Endothelial cell of umbilical vein (primary cell): ENCODE measurements at regions of chr19 and their contacts with region 1.

Region 1: DNA sequence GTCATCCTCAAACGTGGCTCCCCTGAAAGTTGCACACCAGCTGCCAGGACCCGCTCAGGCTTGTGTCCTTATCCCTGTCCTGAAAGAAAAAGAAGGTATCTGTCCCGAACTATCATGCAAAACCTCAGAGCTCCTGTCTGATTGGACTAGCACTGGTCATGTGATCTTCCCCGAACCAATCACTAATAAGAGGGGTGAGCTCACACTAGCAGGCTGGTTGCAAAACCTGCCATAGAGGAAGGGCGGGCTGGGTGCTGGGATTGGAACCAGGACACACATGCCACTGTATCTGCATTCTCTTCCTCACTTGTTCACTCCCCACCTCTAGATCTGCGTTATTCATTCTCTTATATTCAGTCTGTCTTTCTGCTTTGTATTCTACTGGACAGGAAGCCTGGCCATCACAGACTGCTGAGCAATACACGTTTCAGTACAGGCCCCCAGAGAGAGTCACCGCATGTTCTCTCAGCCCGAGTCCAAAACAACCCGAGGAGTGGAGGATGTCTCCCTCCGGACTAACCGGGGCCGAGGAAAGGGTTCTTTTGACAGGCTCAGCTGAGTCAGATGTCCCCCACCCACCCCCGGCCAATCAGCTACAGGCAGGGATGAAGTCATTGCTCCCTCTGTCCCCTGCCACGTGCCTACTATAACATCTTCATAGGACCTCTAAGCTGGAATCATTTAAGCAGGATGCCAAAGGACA is 97.7 kb downstream of the SIPA1L3 start:
- DNase-seq: peak; percentile 97
- H3K4me3 ChIP-seq: peak overlapping the region in 2 of 3 experiments; percentile 6 to 44
- H3K27ac ChIP-seq: peak overlapping the region; percentile 99
- H3K4me1 ChIP-seq: peaks cover 46% of the 10 kb centered on the region
- H3K27me3 ChIP-seq: no peaks in the 10 kb centered on the region
- CTCF ChIP-seq: no peak
- POLR2A ChIP-seq: peak; percentile 96

Region 2: DNA sequence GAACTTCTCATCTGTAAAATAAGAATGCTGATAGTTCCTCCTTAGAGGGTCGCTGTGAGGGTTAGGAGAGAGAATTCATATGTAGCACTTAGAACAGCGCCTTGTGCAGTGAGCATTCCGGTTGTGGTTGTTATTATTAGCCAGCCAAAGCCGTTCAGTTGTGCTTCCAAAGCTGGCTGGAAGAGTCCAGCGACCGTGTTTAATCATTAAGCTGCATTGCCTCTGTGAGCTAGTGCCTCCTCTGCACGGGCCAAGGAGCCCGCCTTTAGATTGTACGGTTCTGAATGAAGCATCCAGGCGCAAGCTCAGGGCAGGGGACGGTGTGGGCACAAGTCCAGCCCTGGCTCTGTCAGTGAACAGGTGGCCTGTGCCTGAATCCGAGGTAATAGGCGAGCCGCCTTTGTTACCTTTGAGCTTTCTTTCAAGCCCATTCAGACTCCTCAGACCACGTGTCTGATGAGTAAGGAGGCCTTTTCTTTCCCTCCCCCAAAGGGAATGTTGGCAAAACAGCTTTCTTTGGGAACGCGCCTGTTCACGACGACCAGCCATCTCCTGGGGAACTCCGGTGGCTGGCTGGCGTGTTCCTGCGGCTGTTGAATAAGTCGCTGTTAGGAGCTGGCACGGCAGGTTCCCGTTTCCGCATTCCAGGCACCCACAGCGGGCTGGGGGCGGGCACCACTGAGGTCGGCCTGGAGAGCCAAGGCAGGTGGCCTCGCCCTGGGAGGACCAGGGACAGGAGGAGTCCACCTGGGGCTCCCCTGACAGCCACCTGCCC is 72.6 kb before region 1 on chr19:
- CTCF ChIA-PET with region 1: no interaction called
- POLR2A ChIA-PET with region 1: interaction called, 9 read pairs
- dilution Hi-C with region 1: no loop called
- intact Hi-C with region 1: loop called (anchors 2 kb)
- DNase-seq: peak; percentile 52
- H3K4me3 ChIP-seq: no peak overlapping the region
- H3K27ac ChIP-seq: peak overlapping the region; percentile 32
- H3K4me1 ChIP-seq: peaks cover 13% of the 10 kb centered on the region
- H3K27me3 ChIP-seq: no peaks in the 10 kb centered on the region
- CTCF ChIP-seq: no peak
- POLR2A ChIP-seq: no peak

Region 3: DNA sequence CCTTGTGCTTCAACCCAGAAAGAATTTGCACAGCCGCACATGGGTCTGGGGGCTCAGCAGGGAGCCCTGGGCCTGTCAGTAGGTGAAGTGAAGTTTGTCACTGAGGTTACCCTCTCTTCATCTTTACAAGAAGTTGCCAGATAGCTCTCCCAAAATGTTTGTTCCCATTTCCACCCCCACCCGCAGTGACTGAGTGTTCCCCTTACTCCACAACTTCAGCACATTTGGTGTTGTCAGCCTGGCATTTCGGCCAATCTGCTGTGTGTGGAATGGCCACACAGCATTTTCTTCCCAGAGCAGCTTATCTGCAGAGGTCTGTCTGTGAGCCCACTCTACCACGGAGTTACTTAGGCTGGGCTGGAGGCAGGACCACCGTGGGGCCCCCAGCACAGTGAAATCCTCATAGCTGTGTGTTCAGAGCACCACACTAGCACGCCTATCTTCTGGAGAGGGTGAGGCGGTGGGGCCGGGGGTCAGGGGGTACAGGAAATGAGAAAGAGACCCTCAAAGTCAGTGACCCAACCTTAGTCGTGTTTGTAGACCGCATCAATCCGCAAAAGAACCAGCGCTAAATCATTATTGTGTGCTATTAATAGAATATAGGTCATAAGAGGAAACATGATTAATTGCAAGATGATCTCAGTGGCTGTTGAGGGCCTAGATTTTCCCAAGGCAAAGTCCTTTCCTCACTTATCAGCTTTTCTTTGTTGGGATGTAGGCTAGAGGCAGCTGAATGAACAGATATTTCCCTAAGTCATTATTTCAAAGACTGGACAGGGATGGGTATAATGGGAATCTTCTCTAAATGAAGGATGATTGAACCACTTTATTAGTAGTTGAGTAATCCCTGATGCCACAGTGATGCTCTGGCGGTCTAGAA is 18.4 kb after region 1 on chr19:
- CTCF ChIA-PET with region 1: interaction called, 8 read pairs
- POLR2A ChIA-PET with region 1: interaction called, 17 read pairs
- dilution Hi-C with region 1: no loop called
- intact Hi-C with region 1: loop called (anchors 1 kb)
- DNase-seq: peak; percentile 80
- H3K4me3 ChIP-seq: no peak overlapping the region
- H3K27ac ChIP-seq: peak overlapping the region; percentile 92
- H3K4me1 ChIP-seq: peaks cover 52% of the 10 kb centered on the region
- H3K27me3 ChIP-seq: no peaks in the 10 kb centered on the region
- CTCF ChIP-seq: no peak
- POLR2A ChIP-seq: no peak

Region 4: GRCh38 chr19:38049105-38049649 is 44.5 kb after region 1 on chr19:
- CTCF ChIA-PET with region 1: interaction called, 22 read pairs
- POLR2A ChIA-PET with region 1: no interaction called
- dilution Hi-C with region 1: no loop called
- intact Hi-C with region 1: loop called (anchors 1 kb)
- DNase-seq: no peak
- H3K4me3 ChIP-seq: no peak overlapping the region
- H3K27ac ChIP-seq: no peak overlapping the region
- H3K4me1 ChIP-seq: no peaks in the 10 kb centered on the region
- H3K27me3 ChIP-seq: no peaks in the 10 kb centered on the region
- CTCF ChIP-seq: no peak
- POLR2A ChIP-seq: no peak

Region 5: DNA sequence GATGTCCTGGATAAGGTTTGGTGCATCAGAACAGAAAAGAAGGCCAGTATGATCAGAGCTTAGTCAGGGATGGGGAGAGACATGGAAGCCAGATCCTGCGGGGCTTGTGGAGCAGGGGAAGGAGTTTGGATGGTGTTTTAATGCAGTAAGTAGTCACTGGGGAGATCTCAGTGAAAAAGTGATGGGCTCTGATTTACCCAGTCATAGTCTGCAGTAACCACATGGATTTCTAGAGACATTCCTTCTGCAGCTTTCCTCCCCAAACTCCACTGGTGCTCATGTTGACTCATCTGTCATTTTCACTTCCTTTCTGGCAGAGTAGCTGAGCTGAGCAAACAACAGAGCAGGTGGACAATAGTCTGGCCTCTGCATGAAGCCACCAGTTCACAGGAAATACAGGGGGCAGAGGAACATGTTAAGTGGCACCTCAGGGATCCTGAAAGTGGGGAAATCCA is 75.3 kb after region 1 on chr19:
- CTCF ChIA-PET with region 1: no interaction called
- POLR2A ChIA-PET with region 1: no interaction called
- dilution Hi-C with region 1: no loop called
- intact Hi-C with region 1: loop called (anchors 1 kb)
- DNase-seq: peak; percentile 81
- H3K4me3 ChIP-seq: no peak overlapping the region
- H3K27ac ChIP-seq: peak overlapping the region; percentile 31
- H3K4me1 ChIP-seq: peaks cover 14% of the 10 kb centered on the region
- H3K27me3 ChIP-seq: no peaks in the 10 kb centered on the region
- CTCF ChIP-seq: no peak
- POLR2A ChIP-seq: no peak

Region 6: DNA sequence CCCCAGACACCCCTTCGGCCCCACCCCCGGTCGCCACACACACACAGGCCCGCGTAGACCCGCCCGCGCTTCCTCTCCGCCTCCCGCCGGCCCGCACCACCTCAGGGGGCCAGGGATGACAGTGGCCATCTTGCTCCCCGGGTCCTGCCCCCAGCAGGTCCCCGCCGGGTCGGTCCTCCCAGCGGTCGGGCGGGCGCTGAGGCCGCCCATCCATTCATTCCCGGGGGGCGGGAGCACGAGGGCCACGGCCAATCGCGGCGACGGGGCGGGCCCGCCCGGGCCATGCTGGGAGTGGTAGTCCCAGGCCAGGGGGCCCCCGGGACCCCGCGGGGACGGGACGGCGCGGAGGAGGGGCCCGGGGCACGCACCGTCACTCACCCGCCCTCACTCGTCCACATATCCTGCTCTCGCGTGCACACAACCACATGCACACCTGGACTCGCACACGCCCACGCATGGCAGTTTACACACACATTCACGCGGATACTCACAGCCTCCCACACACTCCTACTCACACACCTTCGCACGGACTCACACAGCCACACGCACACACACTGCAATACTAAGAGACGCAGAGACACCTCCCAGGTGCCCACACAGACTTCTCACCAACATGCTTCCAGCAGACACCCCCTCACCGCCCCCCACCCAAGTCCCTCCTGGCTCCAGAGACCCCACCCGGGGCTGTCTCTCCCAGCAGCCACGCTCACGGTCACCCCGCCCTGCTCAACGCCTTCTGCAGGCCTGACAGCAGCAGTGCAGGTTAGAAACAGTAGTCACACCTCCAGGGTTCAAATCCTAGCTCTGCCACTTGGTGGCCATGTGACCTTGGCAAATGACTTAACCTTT is 219.6 kb after region 1 on chr19 and contains the start of gene DPF1:
- CTCF ChIA-PET with region 1: interaction called, 4 read pairs
- POLR2A ChIA-PET with region 1: no interaction called
- dilution Hi-C with region 1: no loop called
- intact Hi-C with region 1: loop called (anchors 10 kb)
- DNase-seq: peak; percentile 61
- H3K4me3 ChIP-seq: peak within 1 kb of the TSS; percentile 6 to 60 (median 31)
- H3K27ac ChIP-seq: no peak within 1 kb of the TSS
- H3K4me1 ChIP-seq: peaks cover 12% of the 10 kb centered on the region
- H3K27me3 ChIP-seq: peaks cover 2 to 8% of the 10 kb centered on the region in 2 experiments
- CTCF ChIP-seq: peak in 1 of 2 donors; percentile 6
- POLR2A ChIP-seq: no peak
- total RNA-seq, gene DPF1: 3.9 and 5.0 TPM in 2 replicates